Cardiac septum (tissue), 1 donor: ENCODE measurements at regions of chr19 and their contacts with region 1.

Region 1: GRCh38 chr19:39397360-39398296 is 6.5 kb downstream of the MED29 start:
- DNase-seq: peak; percentile 95

Region 2: GRCh38 chr19:39372047-39372802 is 25.4 kb before region 1 on chr19:
- intact Hi-C with region 1: no loop called
- DNase-seq: peak; percentile 80

Region 3: DNA sequence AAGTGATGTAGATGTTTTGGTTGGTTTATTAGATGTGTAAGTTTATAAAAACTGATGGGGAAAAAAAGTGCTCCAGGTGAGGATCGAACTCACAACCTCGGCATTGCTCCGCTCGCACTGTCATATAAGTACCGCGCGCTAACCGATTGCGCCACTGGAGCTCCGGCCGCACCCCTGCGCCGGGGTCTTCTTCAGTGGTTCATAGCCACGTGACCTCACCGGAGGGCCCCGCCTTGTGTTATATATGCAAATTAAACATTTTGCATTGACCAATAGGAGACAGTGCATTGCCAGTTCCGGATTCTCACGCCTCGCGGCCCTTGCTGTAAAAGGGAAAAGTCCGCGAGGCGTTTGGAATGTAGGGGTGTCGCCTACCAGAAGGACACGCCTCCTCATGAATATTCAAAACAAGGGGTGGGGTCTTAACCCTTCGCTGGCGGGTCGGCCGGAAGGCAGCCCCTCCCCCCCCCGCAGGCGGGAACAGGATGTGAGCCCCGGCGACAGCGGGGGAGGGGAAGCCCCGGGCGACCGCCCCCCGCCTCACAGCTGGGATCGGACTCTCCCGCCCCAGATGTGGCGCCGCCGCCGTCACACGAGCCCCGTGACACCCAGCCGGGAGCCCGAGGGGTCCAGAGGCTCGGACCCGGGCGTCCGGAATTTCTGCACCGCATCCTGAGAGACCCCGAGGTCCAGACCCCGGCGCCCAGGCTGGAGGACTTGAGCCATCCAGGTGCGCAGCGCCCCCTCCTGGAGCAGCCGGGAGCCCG is 14.7 kb after region 1 on chr19 and contains the start of gene PLEKHG2:
- intact Hi-C with region 1: loop called (anchors 1 kb)
- DNase-seq: peak; percentile 97
- total RNA-seq, gene PLEKHG2: 25.1 TPM

Region 4: GRCh38 chr19:39435499-39436349 is 38.1 kb after region 1 on chr19 and contains the start of gene RPS16:
- intact Hi-C with region 1: no loop called
- DNase-seq: peak; percentile 100
- total RNA-seq, gene RPS16: 1,084 TPM